Heart left ventricle (tissue), 16 donors: ENCODE measurements at regions of chr2 and their contacts with region 1.

Region 1: GRCh38 chr2:213806125-213806726 is 522.0 kb downstream of the SPAG16 start:
- DNase-seq: no peak
- ATAC-seq: no peak
- H3K4me3 ChIP-seq: no peak overlapping the region
- H3K27ac ChIP-seq: no peak overlapping the region
- H3K4me1 ChIP-seq: no peaks in the 10 kb centered on the region
- H3K27me3 ChIP-seq: no peaks in the 10 kb centered on the region
- CTCF ChIP-seq: peak in 10 of 12 donors; percentile 12 to 54 (median 28)
- POLR2A ChIP-seq: no peak

Region 2: GRCh38 chr2:215002500-215002899 is 1196.3 kb after region 1 on chr2:
- intact Hi-C with region 1: loop called in 4 of 10 experiments (anchors 5 to 10 kb)
- DNase-seq: no peak
- ATAC-seq: no peak
- H3K4me3 ChIP-seq: no peak overlapping the region
- H3K27ac ChIP-seq: no peak overlapping the region
- H3K4me1 ChIP-seq: no peaks in the 10 kb centered on the region
- H3K27me3 ChIP-seq: no peaks in the 10 kb centered on the region
- CTCF ChIP-seq: peak in 11 of 12 donors; percentile 24 to 61 (median 48)
- POLR2A ChIP-seq: no peak